PC-9 (cell line): ENCODE measurements at regions of chr19 and their contacts with region 1.

Region 1: DNA sequence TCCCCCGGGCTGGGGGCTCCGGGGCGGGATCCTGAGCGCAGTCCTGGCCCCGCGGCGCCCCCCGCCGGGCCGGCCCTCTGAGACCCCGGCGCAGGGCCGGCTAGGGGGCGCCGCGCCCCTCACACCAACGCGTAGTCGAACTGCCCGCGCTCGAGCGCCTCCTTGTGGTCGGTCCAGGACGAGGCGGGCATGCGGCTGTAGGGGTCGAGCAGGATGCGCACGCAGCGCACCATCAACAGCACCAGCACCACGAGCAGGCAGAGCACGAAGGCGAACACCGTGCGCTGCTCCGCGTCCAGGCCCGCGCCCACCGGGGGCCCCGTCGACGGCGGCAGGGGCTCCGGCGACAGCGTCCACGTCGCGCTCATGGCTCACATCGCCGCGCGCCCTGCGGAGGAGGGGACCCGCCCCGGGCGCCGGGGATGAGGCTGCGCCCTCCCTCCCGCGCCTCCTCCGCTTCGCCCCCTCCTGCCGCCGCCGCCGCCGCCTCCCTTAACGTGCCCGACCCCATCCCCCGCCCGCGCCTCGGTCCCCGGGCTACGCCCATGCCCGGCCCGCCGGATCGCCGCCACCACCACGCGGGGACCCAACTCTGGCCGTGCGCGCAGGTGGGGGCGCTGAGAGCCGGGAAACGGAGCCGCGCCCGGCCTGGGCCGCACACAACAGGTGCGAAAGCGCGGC is 624 bp downstream of the CTXN1 start:
- DNase-seq: peak; percentile 61 to 71
- H3K4me3 ChIP-seq: peak overlapping the region; percentile 67
- H3K27ac ChIP-seq: no peak overlapping the region
- H3K4me1 ChIP-seq: peaks cover 35% of the 10 kb centered on the region
- H3K27me3 ChIP-seq: no peaks in the 10 kb centered on the region
- CTCF ChIP-seq: peak; percentile 87

Region 2: DNA sequence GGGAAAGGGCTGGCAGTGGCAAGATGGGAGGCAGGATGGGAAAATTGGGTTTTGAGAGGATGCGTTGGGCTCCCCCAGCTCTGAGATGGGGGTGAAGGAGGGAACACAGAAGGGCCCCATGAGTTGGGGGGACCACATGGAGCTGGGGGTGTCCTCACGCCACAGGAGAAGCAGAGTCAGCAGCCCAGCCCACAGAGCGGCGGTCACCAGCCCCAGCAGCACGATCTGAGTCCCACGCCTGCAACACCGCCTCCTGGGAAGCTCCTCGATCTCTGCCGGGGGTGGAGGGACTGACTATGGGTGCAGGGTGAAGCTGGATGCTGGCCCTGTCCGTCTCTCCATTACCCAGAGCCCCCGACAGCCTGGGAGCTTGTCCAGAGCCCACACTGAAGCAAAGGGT is 226.7 kb before region 1 on chr19:
- CTCF ChIA-PET with region 1: interaction called, 10 read pairs
- POLR2A ChIA-PET with region 1: no interaction called
- intact Hi-C with region 1: no loop called
- DNase-seq: no peak
- H3K4me3 ChIP-seq: no peak overlapping the region
- H3K27ac ChIP-seq: no peak overlapping the region
- H3K4me1 ChIP-seq: no peaks in the 10 kb centered on the region
- H3K27me3 ChIP-seq: peaks cover 73% of the 10 kb centered on the region
- CTCF ChIP-seq: no peak

Region 3: GRCh38 chr19:7943444-7944176 is 18.3 kb after region 1 on chr19 and contains the start of gene TIMM44:
- CTCF ChIA-PET with region 1: interaction called, 25 read pairs
- POLR2A ChIA-PET with region 1: interaction called, 7 read pairs
- intact Hi-C with region 1: no loop called
- DNase-seq: peak; percentile 99
- H3K4me3 ChIP-seq: peak within 1 kb of the TSS; percentile 87
- H3K27ac ChIP-seq: peak within 1 kb of the TSS; percentile 91
- H3K4me1 ChIP-seq: peaks cover 17% of the 10 kb centered on the region
- H3K27me3 ChIP-seq: no peaks in the 10 kb centered on the region
- CTCF ChIP-seq: no peak
- total RNA-seq, gene TIMM44: 72.8 and 74.6 TPM in 2 replicates

Region 4: GRCh38 chr19:8242211-8242821 is 317.0 kb after region 1 on chr19:
- CTCF ChIA-PET with region 1: no interaction called
- POLR2A ChIA-PET with region 1: interaction called, 10 read pairs
- intact Hi-C with region 1: no loop called
- DNase-seq: no peak
- H3K4me3 ChIP-seq: no peak overlapping the region
- H3K27ac ChIP-seq: no peak overlapping the region
- H3K4me1 ChIP-seq: peaks cover 13% of the 10 kb centered on the region
- H3K27me3 ChIP-seq: no peaks in the 10 kb centered on the region
- CTCF ChIP-seq: no peak